Activated naive CD4-positive, alpha-beta T cell treated with anti-CD3 and anti-CD28 coated beads, Interleukin-2, amount 10 ng/mL, durations not matched to agents 7 days and 5 days (primary cell): ENCODE measurements at regions of chr19 and their contacts with region 1.

Region 1: GRCh38 chr19:8423817-8424223 is 10.7 kb downstream of the MARCHF2 start:
- DNase-seq: no peak
- H3K4me3 Mint-ChIP-seq: no peak overlapping the region
- H3K27ac Mint-ChIP-seq: no peak overlapping the region
- H3K4me1 Mint-ChIP-seq: no peaks in the 10 kb centered on the region
- H3K27me3 Mint-ChIP-seq: no peaks in the 10 kb centered on the region

Region 2: GRCh38 chr19:8342684-8343482 is 80.9 kb before region 1 on chr19 and contains the start of gene KANK3:
- CTCF ChIA-PET with region 1: no interaction called
- DNase-seq: peak; percentile 97
- H3K4me3 Mint-ChIP-seq: peak within 1 kb of the TSS; percentile 85
- H3K27ac Mint-ChIP-seq: peak within 1 kb of the TSS; percentile 77
- H3K4me1 Mint-ChIP-seq: peaks cover 18% of the 10 kb centered on the region
- H3K27me3 Mint-ChIP-seq: peaks cover 82% of the 10 kb centered on the region

Region 3: DNA sequence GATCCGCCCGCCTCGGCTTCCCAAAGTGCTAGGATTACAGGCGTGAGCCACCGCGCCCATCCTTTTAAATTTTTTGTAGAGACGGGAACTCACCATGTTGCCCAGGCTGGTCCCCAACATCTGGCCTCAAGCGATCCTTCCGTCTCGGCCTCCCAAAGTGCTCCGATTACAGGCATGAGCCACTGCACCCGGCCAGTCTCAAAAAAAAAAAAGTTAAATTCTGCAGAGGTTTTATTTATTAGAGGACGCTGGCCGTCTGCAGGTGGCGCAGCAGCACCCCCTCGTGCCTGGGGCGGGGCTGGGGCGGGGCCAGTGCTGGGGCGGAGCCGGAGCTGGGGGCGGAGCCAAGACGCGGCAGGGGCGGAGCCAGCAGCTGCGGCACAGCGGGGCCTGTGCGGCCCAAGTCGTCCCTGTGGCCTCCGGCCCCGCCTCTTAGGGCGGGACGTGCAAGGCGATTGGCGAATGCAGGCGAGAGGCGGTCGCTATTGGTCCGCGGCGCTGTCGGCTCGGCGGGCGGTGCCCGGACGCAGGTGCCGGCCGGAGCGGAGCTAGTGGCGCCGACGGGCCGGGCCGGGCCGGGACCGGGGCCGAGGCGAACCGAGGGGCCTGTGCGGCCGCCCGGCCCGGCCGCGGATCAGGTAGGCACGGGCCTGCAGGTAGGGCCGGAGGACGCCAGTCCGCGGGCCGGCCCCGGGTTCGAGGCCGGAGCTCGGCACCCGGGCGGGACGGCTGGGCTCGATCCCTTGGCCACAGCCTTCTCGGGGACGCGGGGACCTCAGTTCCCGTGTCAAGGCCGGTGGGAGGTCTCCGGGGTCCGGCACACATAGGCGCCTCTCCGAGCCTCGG is 10.8 kb before region 1 on chr19 and contains the start of gene MARCHF2:
- CTCF ChIA-PET with region 1: interaction called, 16 read pairs
- DNase-seq: peak; percentile 96
- H3K4me3 Mint-ChIP-seq: peak within 1 kb of the TSS; percentile 66
- H3K27ac Mint-ChIP-seq: peak within 1 kb of the TSS; percentile 17
- H3K4me1 Mint-ChIP-seq: peaks cover 10% of the 10 kb centered on the region
- H3K27me3 Mint-ChIP-seq: peaks cover 8% of the 10 kb centered on the region